PC-9 (cell line): ENCODE measurements at regions of chr17 and their contacts with region 1.

Region 1: DNA sequence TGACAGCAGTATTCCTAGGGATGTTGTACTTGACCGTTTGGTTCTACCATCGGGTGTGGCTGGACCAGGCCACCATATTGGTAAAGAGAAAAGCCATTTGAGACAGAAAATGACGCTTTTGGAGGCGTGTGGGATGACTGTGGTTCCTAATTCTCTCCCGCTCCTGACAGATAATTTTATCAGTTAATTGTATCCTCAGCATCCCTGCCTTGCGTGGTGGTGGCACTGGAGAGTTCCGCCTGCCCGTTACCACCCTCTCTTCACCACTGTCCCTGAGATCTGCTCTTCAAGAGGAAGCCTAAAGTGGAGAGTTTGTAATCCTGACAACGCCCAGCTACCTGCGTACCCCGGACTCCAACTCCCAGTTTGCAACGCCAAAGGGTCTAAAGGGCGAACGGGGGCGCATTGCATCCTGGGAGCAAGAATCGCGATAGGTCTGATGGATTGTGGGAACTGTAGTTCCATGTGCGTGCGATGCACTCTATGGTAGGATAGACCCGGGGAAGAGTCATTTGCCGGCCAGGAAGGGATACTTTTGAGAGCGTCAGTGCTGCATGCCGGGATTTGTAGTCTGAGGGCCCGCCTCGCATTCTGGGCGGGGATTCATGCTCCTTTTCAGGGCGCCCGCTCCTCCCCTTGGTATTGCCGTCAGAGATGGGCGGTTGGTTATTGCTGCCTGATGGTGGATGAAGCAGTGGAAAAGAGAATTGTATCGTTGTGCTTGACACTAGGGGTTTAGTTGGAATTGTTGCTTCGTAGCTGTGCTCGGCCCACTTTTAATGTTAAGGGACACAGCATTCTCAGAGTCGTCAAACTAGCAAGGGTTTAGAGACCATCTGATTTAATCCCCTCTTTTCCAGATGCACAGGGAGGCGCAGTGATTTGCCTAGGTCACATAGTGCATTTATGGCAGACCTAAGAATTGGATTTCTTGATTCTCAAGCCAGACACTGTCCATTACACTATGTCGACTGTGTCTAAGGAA is 965 bp upstream of the PHF12 start:
- DNase-seq: peak; percentile 94 to 97
- H3K4me3 ChIP-seq: peak overlapping the region; percentile 92
- H3K27ac ChIP-seq: peak overlapping the region; percentile 94
- H3K4me1 ChIP-seq: peaks cover 20% of the 10 kb centered on the region
- H3K27me3 ChIP-seq: no peaks in the 10 kb centered on the region
- CTCF ChIP-seq: no peak

Region 2: GRCh38 chr17:28726226-28727130 is 225.8 kb before region 1 on chr17 and contains the start of gene TLCD1:
- CTCF ChIA-PET with region 1: interaction called, 12 read pairs
- POLR2A ChIA-PET with region 1: interaction called, 35 read pairs
- intact Hi-C with region 1: loop called (anchors 1 kb)
- DNase-seq: peak; percentile 89 to 96
- H3K4me3 ChIP-seq: peak within 1 kb of the TSS; percentile 87
- H3K27ac ChIP-seq: peak within 1 kb of the TSS; percentile 97
- H3K4me1 ChIP-seq: peaks cover 50% of the 10 kb centered on the region
- H3K27me3 ChIP-seq: no peaks in the 10 kb centered on the region
- CTCF ChIP-seq: peak; percentile 98
- total RNA-seq, gene TLCD1: 14.7 and 19.4 TPM in 2 replicates

Region 3: GRCh38 chr17:28871056-28871579 is 81.2 kb before region 1 on chr17:
- CTCF ChIA-PET with region 1: no interaction called
- POLR2A ChIA-PET with region 1: interaction called, 30 read pairs
- intact Hi-C with region 1: no loop called
- DNase-seq: no peak
- H3K4me3 ChIP-seq: no peak overlapping the region
- H3K27ac ChIP-seq: no peak overlapping the region
- H3K4me1 ChIP-seq: peaks cover 7% of the 10 kb centered on the region; the same call in 1 of the 2 replicates
- H3K27me3 ChIP-seq: no peaks in the 10 kb centered on the region
- CTCF ChIP-seq: no peak

Region 4: DNA sequence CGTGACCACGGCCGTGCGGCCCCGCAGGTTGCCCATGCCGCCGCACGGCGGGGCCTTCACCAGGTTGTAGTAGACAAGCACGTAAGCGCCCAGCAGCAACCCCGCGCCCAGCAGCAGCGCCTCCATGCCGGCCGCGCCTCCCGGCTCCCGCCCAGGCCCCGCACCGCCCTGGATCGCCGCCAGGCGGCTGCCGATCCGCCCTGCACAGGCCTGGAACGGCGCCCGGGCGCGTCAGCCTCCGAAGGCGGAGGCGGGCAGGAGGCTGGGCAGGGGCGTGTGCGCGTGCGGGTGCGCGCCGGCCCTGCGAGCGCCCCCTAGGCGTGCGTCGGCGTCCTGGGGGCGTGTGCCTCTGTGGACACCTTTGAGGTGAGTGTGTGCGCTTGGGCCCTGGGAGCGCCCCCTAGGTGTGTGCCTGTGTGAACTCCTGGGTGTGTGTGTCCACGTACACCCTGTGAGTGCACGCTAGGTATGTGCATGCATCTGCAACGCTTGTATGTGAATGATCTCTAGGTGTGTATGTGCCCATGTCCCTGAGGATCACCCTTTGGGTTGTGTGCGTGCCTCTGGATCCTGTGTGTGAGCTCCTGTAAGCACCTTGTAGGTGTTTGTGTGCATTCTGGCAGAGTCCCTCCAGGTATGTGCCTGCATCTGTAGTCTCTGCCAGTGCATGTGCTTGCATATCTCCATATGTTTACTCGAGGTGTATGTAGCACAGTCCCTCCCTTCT is 49.3 kb before region 1 on chr17 and contains the start of gene DHRS13:
- CTCF ChIA-PET with region 1: no interaction called
- POLR2A ChIA-PET with region 1: no interaction called
- intact Hi-C with region 1: no loop called
- DNase-seq: peak; percentile 85 to 94
- H3K4me3 ChIP-seq: peak within 1 kb of the TSS; percentile 73
- H3K27ac ChIP-seq: no peak within 1 kb of the TSS
- H3K4me1 ChIP-seq: peaks cover 15% of the 10 kb centered on the region
- H3K27me3 ChIP-seq: no peaks in the 10 kb centered on the region
- CTCF ChIP-seq: peak; percentile 88
- total RNA-seq, gene DHRS13: 15.8 and 17.5 TPM in 2 replicates

Region 5: GRCh38 chr17:29059281-29059680 is 107.0 kb after region 1 on chr17:
- CTCF ChIA-PET with region 1: no interaction called
- POLR2A ChIA-PET with region 1: no interaction called
- intact Hi-C with region 1: no loop called
- DNase-seq: peak in 1 of 2 experiments; percentile 70
- H3K4me3 ChIP-seq: no peak overlapping the region
- H3K27ac ChIP-seq: no peak overlapping the region
- H3K4me1 ChIP-seq: peaks cover 6% of the 10 kb centered on the region; the same call in 1 of the 2 replicates
- H3K27me3 ChIP-seq: no peaks in the 10 kb centered on the region
- CTCF ChIP-seq: no peak

Region 6: GRCh38 chr17:29111816-29112499 is 159.7 kb after region 1 on chr17:
- CTCF ChIA-PET with region 1: interaction called, 3 read pairs
- POLR2A ChIA-PET with region 1: no interaction called
- intact Hi-C with region 1: loop called (anchors 5 kb)
- DNase-seq: peak in 1 of 2 experiments; percentile 41
- H3K4me3 ChIP-seq: no peak overlapping the region
- H3K27ac ChIP-seq: no peak overlapping the region
- H3K4me1 ChIP-seq: peaks cover 31% of the 10 kb centered on the region
- H3K27me3 ChIP-seq: no peaks in the 10 kb centered on the region
- CTCF ChIP-seq: peak; percentile 75